ENCODE measurements at regions of chr14 and their contacts with region 1.

Region 1: DNA sequence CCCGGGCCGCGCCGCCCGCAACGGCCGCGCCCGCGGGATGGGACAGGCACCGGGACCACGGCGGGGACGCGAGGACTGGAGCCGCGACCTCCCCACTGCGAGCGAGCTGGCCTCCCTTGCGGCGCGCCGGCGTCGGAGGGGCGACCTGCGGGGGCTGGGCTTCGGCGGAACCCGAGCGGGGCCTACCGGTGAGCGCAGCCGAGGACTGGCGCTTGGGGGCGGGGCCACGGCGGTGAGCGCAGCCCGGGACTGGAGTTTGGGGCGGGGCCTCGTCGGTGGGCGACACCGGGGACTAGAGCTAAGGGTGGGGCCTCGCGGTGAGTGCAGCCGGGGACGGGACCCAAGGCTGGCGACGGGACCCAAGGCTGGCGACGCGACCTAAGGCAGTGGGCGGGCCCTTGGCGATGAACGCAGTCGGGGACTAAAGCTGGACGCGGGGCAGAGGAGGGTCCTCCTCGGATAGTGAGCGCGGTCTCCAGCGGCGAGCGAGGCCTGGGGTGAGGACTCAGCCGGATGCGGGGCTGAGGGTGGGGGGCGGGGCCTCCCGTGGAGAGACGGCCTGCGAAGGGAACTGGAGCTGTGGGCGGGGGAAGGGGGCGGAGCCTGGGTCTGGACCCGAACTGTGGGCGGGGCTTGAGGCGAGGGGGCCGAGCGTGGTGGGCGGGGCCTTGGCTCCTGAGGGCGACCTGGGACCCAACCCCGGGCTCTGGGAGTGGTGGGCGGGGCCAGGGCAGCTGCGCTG is at the start of gene BRF1:
- DNase-seq: peak; percentile 100
- ATAC-seq: peak; percentile 86
- H3K4me3 Mint-ChIP-seq: peak within 1 kb of the TSS; percentile 89
- H3K27ac Mint-ChIP-seq: peak within 1 kb of the TSS; percentile 89
- H3K4me1 Mint-ChIP-seq: peaks cover 13% of the 10 kb centered on the region
- H3K27me3 Mint-ChIP-seq: no peaks in the 10 kb centered on the region
- CTCF ChIP-seq: no peak
- total RNA-seq, gene BRF1: 28.7 and 32.8 TPM in 2 replicates

Region 2: DNA sequence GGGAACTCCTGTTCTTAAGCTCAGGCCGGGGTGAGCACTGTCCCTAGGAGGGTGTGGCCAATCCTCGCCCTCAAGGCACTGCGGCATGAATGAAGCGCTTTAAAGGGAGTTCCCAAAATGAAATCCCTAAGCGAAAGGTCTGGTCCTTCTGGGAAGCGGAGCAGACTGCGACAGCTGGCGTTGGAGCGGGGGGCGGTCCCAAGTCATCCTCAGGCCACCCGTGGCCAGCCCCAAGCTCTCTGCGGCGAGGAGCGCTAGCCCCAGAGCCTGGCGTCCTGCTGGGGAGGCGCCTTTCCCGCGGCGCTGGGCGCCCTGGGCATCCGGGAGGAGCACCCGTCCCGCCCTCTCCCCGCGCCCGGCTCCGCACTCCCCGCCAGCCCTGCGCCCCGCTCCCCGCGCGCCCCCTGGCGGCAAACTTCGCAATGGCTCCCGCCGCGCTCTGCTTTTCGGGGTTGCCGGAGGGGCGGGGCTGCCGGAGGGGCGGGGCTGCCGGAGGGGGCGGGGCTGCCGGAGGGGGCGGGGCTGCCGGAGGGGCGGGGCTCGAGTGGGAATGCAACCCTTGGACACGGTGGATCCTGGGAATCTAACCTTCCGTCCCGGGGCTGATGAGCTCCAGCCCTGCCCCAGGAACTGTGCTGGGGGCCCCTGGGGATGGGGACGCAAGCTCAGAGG is 474.6 kb before region 1 on chr14:
- CTCF ChIA-PET with region 1: no interaction called
- POLR2A ChIA-PET with region 1: no interaction called
- intact Hi-C with region 1: loop called (anchors 2 kb)
- DNase-seq: peak; percentile 97
- ATAC-seq: peak; percentile 87
- H3K4me3 Mint-ChIP-seq: peak overlapping the region; percentile 77
- H3K27ac Mint-ChIP-seq: no peak overlapping the region
- H3K4me1 Mint-ChIP-seq: peaks cover 20% of the 10 kb centered on the region
- H3K27me3 Mint-ChIP-seq: peaks cover 9% of the 10 kb centered on the region
- CTCF ChIP-seq: no peak

Region 3: DNA sequence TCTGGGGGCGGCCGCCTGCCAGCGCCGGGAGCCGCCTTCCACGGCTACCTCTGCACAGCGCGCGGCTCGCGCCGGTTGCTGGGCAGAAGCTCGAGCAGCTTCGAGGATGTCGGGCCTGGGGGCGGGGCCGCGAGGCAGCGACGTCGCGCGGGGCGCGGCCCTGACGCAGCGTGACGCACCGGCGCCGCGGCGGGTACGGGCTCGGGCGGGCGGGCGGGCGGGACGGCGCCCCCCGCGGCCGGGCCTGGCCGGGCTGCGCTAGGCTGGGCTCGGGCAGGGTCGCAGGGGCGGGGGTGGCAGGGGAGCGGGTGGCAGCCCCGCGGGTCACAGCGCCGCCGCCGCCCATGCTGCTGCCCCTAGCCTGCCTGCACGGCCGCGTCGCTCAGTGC is 52.6 kb before region 1 on chr14 and contains the start of gene BTBD6:
- CTCF ChIA-PET with region 1: no interaction called
- POLR2A ChIA-PET with region 1: interaction called, 12 read pairs
- intact Hi-C with region 1: no loop called
- DNase-seq: peak; percentile 88
- ATAC-seq: peak; percentile 95
- H3K4me3 Mint-ChIP-seq: peak within 1 kb of the TSS; percentile 82
- H3K27ac Mint-ChIP-seq: peak within 1 kb of the TSS; percentile 56
- H3K4me1 Mint-ChIP-seq: peaks cover 40% of the 10 kb centered on the region
- H3K27me3 Mint-ChIP-seq: no peaks in the 10 kb centered on the region
- CTCF ChIP-seq: no peak
- total RNA-seq, gene BTBD6: 17.5 and 21.0 TPM in 2 replicates

Region 4: GRCh38 chr14:105351920-105352851 is 51.2 kb after region 1 on chr14:
- CTCF ChIA-PET with region 1: no interaction called
- POLR2A ChIA-PET with region 1: interaction called, 3 read pairs
- intact Hi-C with region 1: loop called (anchors 2 kb)
- DNase-seq: peak; percentile 73
- ATAC-seq: peak; percentile 90
- H3K4me3 Mint-ChIP-seq: no peak overlapping the region
- H3K27ac Mint-ChIP-seq: peak overlapping the region; percentile 53
- H3K4me1 Mint-ChIP-seq: peaks cover 7% of the 10 kb centered on the region
- H3K27me3 Mint-ChIP-seq: no peaks in the 10 kb centered on the region
- CTCF ChIP-seq: no peak

Region 5: DNA sequence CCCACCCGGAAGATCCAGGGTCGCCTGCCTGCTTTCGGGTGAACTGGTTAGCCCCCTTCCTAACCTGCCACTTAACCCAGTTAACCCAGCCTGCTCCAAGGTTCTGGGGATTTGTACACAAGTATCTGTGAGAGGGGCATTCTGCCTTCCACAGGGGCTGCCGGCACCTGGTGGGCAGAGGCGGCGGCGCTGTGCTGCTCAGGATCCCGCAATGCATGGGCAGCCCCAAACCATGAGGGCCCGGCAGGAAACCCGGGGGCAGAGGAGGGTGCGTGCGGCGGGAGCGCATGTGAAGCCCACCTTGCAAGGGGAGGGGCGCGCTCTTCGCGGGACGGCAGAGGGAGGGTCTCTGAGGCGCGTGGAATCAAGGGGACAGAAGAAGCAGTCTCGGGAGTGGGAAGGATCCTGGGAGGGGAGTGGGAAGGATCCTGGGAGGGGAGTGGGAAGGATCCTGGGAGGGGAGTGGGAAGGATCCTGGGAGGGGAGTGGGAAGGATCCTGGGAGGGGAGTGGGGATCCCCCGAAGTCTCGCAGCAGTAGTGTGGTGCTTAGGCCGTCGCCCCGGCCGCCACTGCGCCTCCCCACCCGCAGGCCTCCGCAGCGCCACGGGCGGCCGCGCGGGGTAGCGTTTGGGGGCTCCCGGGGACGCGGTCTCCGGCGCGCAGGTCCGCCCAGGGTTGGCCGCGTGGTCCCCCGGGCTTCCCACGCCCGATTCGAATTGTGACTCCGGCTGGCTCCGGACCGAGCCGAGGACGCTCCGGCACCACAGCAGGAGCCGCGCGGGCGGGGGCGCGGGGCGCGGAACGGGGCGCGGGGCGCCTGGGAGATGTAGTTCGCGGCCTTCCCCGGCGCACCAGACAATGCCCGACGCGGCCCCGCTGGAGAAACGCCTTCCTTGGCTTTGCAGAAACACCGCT is 113.8 kb after region 1 on chr14:
- CTCF ChIA-PET with region 1: no interaction called
- POLR2A ChIA-PET with region 1: no interaction called
- intact Hi-C with region 1: loop called (anchors 1 kb)
- DNase-seq: peak; percentile 65
- ATAC-seq: peak; percentile 80
- H3K4me3 Mint-ChIP-seq: peak overlapping the region; percentile 68
- H3K27ac Mint-ChIP-seq: no peak overlapping the region
- H3K4me1 Mint-ChIP-seq: peaks cover 14% of the 10 kb centered on the region
- H3K27me3 Mint-ChIP-seq: peaks cover 12% of the 10 kb centered on the region
- CTCF ChIP-seq: no peak

Region 6: GRCh38 chr14:105974902-105975301 is 673.9 kb after region 1 on chr14:
- CTCF ChIA-PET with region 1: no interaction called
- POLR2A ChIA-PET with region 1: no interaction called
- intact Hi-C with region 1: no loop called
- DNase-seq: no peak
- ATAC-seq: peak; percentile 77
- H3K4me3 Mint-ChIP-seq: no peak overlapping the region
- H3K27ac Mint-ChIP-seq: no peak overlapping the region
- H3K4me1 Mint-ChIP-seq: peaks cover 3% of the 10 kb centered on the region
- H3K27me3 Mint-ChIP-seq: no peaks in the 10 kb centered on the region
- CTCF ChIP-seq: no peak

Measured in activated B cell treated with CpG ODN at 0.5 μM for 24 hours (primary cell).